ENCODE measurements at regions of chr5 and their contacts with region 1.

Region 1: DNA sequence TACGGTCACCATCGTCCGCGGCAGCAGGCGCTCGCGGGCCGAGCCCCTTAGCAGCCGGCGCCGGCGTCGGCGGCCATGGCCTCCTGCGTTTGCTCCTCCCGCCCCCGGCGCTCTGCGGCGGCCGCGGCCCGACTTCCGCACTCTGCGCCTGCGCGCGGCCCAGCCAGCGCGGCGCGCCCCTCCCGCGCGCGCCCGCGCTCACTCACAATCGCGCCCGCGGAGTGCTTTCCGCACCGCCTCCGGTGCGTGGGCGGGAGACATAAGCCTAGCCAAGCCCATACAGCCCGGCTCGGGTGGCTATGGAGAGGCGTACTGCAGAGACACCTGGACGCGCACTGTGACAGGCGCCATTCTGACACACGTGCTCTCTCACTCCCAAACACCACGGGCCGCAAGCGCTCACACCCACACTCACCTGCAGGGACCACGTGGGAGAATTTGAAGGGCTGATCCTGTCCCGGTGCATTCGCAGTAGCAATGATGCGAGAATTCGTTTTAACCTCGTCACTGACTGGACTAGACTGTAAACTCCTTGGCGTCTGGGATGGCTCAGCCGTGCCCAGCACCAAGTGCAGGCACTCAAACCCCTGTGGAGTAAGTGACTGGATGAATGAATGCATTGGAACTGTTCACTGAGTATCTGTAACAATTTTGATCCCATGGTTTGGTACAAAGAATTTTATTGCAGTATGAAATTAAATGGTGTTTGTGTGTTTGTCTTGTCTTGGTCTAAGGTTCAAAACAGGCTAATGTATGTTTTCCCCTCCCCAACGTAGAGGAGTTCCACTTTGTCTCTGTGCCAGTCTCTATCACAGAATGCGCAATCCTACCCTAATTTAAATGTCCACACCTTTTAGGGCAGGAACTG is at the start of gene RNF145:
- DNase-seq: peak; percentile 87
- H3K4me3 ChIP-seq: peak within 1 kb of the TSS; percentile 86
- H3K27ac ChIP-seq: peak within 1 kb of the TSS; percentile 92
- H3K4me1 ChIP-seq: peaks cover 41% of the 10 kb centered on the region
- CTCF ChIP-seq: no peak
- total RNA-seq, gene RNF145: 18.6 and 18.9 TPM in 2 replicates

Region 2: GRCh38 chr5:157271740-157272271 is 1937.9 kb before region 1 on chr5:
- CTCF ChIA-PET with region 1: no interaction called
- POLR2A ChIA-PET with region 1: no interaction called
- intact Hi-C with region 1: loop called (anchors 5 kb)
- DNase-seq: peak; percentile 98
- H3K4me3 ChIP-seq: peak overlapping the region; percentile 82
- H3K27ac ChIP-seq: peak overlapping the region; percentile 98
- H3K4me1 ChIP-seq: peaks cover 93% of the 10 kb centered on the region
- CTCF ChIP-seq: no peak

Region 3: GRCh38 chr5:159156426-159157238 is 53.0 kb before region 1 on chr5:
- CTCF ChIA-PET with region 1: interaction called, 4 read pairs
- POLR2A ChIA-PET with region 1: interaction called, 3 read pairs
- intact Hi-C with region 1: loop called (anchors 2 kb)
- DNase-seq: peak; percentile 83
- H3K4me3 ChIP-seq: no peak overlapping the region
- H3K27ac ChIP-seq: no peak overlapping the region
- H3K4me1 ChIP-seq: peaks cover 20% of the 10 kb centered on the region
- CTCF ChIP-seq: peak; percentile 98

Region 4: GRCh38 chr5:159198063-159199036 is 11.3 kb before region 1 on chr5:
- CTCF ChIA-PET with region 1: no interaction called
- POLR2A ChIA-PET with region 1: interaction called, 53 read pairs
- intact Hi-C with region 1: no loop called
- DNase-seq: peak; percentile 67
- H3K4me3 ChIP-seq: no peak overlapping the region
- H3K27ac ChIP-seq: peak overlapping the region; percentile 59
- H3K4me1 ChIP-seq: peaks cover 26% of the 10 kb centered on the region
- CTCF ChIP-seq: no peak

Region 5: GRCh38 chr5:159331093-159331973 is 121.7 kb after region 1 on chr5:
- CTCF ChIA-PET with region 1: no interaction called
- POLR2A ChIA-PET with region 1: interaction called, 5 read pairs
- intact Hi-C with region 1: loop called (anchors 1 kb)
- DNase-seq: peak; percentile 73
- H3K4me3 ChIP-seq: peak overlapping the region; percentile 72
- H3K27ac ChIP-seq: peak overlapping the region; percentile 57
- H3K4me1 ChIP-seq: peaks cover 36% of the 10 kb centered on the region
- CTCF ChIP-seq: peak; percentile 84

Region 6: DNA sequence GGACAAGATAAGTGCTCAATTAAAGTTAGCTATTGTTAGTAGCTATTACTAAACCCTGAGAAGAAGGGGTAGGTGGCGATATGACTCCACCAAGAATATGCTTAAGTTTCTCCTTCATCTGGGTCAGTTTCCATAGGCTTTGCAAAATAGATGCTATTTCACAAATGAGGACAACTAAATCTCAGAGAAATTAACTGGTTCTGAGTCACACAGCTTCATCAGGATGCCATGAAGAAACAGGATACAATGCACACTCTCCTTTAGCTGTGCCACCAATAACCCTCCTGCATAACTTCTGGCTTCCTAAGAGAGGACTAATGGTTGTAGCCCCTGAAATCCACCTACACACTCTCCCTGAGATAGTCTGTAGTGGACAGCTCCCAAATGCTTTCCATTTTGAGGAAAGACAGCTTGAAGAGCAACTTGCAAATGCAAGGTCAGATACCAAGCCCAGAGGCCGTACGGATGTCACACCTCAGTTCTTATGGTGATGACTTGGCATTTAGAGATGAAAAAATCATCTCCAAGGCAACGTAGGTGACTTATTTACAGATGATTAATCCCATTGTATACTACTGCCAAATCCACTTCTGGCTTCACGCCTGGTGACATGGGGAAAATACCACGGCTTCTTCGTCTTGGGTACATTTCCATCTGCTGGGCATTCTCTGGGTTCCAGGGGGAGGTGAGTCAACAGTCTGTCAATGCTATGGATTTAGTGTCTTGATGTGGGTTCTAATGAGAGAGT is 372.0 kb after region 1 on chr5:
- CTCF ChIA-PET with region 1: no interaction called
- POLR2A ChIA-PET with region 1: no interaction called
- intact Hi-C with region 1: no loop called
- DNase-seq: no peak
- H3K4me3 ChIP-seq: no peak overlapping the region
- H3K27ac ChIP-seq: no peak overlapping the region
- H3K4me1 ChIP-seq: no peaks in the 10 kb centered on the region
- CTCF ChIP-seq: no peak